HCT116 (cell line): ENCODE measurements at regions of chr12 and their contacts with region 1.

Region 1: GRCh38 chr12:85029456-85029855 is 6.6 kb downstream of the TSPAN19 start:
- DNase-seq: peak; percentile 21
- ATAC-seq: no peak
- H3K4me3 ChIP-seq: no peak overlapping the region
- H3K27ac ChIP-seq: no peak overlapping the region
- H3K4me1 ChIP-seq: no peaks in the 10 kb centered on the region
- H3K27me3 ChIP-seq: no peaks in the 10 kb centered on the region
- CTCF ChIP-seq: peak in 2 of 3 experiments; percentile 49 to 63; a peak in 4 of 6 replicates
- POLR2A ChIP-seq: no peak
- RAD21 ChIP-seq: peak; percentile 70

Region 2: GRCh38 chr12:84874125-84874824 is 155.2 kb before region 1 on chr12:
- CTCF ChIA-PET with region 1: interaction called, 132 read pairs
- POLR2A ChIA-PET with region 1: interaction called, 5 read pairs
- RAD21 ChIA-PET with region 1: interaction called, 3 to 9 read pairs
- intact Hi-C with region 1: loop called (anchors 1 kb)
- DNase-seq: peak; percentile 55
- ATAC-seq: peak; percentile 84
- H3K4me3 ChIP-seq: no peak overlapping the region
- H3K27ac ChIP-seq: no peak overlapping the region
- H3K4me1 ChIP-seq: no peaks in the 10 kb centered on the region
- H3K27me3 ChIP-seq: no peaks in the 10 kb centered on the region
- CTCF ChIP-seq: peak; percentile 58 to 84 (median 80)
- POLR2A ChIP-seq: no peak
- RAD21 ChIP-seq: peak; percentile 88

Region 3: DNA sequence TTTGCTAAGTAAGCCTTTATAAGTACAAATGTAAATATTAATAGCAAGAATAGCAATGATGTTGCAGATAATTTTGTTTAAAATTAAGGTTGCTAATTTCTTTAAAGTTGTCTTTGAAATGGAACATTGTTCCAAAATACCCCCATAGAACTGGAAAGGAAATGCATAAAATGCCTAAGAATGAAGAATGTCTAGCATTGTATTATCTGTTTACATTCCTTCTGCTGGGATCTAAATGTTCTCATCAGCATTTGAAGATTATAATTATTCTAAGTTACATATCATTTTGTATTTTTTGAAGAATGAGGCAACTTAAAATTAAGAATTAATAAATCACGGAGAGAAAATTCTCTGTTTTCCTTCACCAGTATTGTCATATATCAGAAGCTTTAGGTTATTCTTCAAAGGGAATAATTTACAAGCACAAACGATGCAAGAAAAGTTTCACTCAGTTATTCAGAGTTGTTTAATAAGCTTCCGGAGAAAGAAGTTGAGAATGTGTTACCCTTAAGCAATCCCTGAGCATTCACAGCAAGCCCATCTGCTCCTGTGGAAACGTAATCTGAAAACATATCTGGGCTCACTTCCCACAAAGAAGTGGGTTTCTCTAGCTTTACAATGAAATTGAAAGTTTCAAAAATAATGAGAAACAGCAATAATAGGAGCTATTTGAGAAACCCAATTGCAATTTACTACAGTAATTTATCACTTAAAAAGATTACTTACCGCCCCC is 138.2 kb before region 1 on chr12:
- CTCF ChIA-PET with region 1: interaction called, 11 read pairs
- POLR2A ChIA-PET with region 1: no interaction called
- RAD21 ChIA-PET with region 1: no interaction called
- intact Hi-C with region 1: no loop called
- DNase-seq: no peak
- ATAC-seq: no peak
- H3K4me3 ChIP-seq: no peak overlapping the region
- H3K27ac ChIP-seq: no peak overlapping the region
- H3K4me1 ChIP-seq: no peaks in the 10 kb centered on the region
- H3K27me3 ChIP-seq: no peaks in the 10 kb centered on the region
- CTCF ChIP-seq: no peak
- POLR2A ChIP-seq: no peak
- RAD21 ChIP-seq: no peak

Region 4: DNA sequence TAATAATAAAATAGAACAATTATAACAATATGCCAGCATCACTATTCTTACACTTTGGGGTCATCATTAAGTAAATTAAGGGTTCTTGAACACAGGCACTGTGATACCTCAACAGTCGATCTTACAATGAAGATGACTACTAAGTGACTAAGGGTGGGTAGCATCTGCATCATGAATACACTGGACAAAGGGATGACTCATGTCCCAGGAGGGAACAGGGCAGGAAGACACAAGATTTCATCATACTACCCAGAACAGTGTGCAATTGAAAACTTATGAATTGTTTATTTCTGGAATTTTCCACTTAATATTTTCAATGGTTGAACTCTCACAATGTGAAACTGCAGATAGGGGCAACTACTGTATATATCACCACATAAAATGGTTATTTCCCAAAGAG is 13.0 kb before region 1 on chr12:
- CTCF ChIA-PET with region 1: interaction called, 20 read pairs
- POLR2A ChIA-PET with region 1: no interaction called
- RAD21 ChIA-PET with region 1: no interaction called
- intact Hi-C with region 1: no loop called
- DNase-seq: peak; percentile 91
- ATAC-seq: peak; percentile 89
- H3K4me3 ChIP-seq: no peak overlapping the region
- H3K27ac ChIP-seq: no peak overlapping the region
- H3K4me1 ChIP-seq: peaks cover 4 to 8% of the 10 kb centered on the region in 2 experiments; a peak in 2 of 4 replicates
- H3K27me3 ChIP-seq: no peaks in the 10 kb centered on the region
- CTCF ChIP-seq: no peak
- POLR2A ChIP-seq: no peak
- RAD21 ChIP-seq: no peak

Region 5: GRCh38 chr12:85043821-85044220 is 14.4 kb after region 1 on chr12:
- CTCF ChIA-PET with region 1: interaction called, 11 read pairs
- POLR2A ChIA-PET with region 1: no interaction called
- RAD21 ChIA-PET with region 1: no interaction called
- intact Hi-C with region 1: no loop called
- DNase-seq: no peak
- ATAC-seq: no peak
- H3K4me3 ChIP-seq: no peak overlapping the region
- H3K27ac ChIP-seq: no peak overlapping the region
- H3K4me1 ChIP-seq: no peaks in the 10 kb centered on the region
- H3K27me3 ChIP-seq: no peaks in the 10 kb centered on the region
- CTCF ChIP-seq: no peak
- POLR2A ChIP-seq: no peak
- RAD21 ChIP-seq: no peak